Activated naive CD4-positive, alpha-beta T cell treated with anti-CD3 and anti-CD28 coated beads, Interleukin-2, amount 10 ng/mL, durations not matched to agents 7 days and 5 days (primary cell): ENCODE measurements at regions of chr3 and their contacts with region 1.

Region 1: DNA sequence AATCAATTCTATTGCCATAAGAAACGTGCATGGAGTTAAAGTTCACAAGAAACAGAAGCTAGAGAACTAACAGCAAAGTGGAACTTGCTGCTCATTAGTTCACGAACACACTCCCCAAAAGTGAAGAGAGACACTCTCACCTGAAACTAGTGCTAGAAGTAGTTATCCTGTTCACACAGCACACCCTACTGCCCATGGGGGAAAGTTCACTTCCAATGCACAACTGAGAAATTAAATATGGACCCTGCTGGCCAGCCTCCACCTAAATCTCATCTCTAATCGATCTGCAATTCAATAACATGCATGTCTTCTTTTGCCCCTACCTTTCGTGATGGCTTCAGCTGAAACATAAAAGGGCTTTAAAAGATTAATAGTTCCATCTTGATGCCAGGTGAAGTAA is 39.4 kb upstream of the FRMD4B start:
- DNase-seq: peak; percentile 41
- H3K4me3 Mint-ChIP-seq: no peak overlapping the region
- H3K27ac Mint-ChIP-seq: no peak overlapping the region
- H3K4me1 Mint-ChIP-seq: peaks cover 2% of the 10 kb centered on the region
- H3K27me3 Mint-ChIP-seq: peaks cover 4% of the 10 kb centered on the region

Region 2: GRCh38 chr3:69324362-69325025 is 100.8 kb before region 1 on chr3:
- CTCF ChIA-PET with region 1: interaction called, 30 read pairs
- DNase-seq: no peak
- H3K4me3 Mint-ChIP-seq: no peak overlapping the region
- H3K27ac Mint-ChIP-seq: peak overlapping the region; percentile 60
- H3K4me1 Mint-ChIP-seq: peaks cover 42% of the 10 kb centered on the region
- H3K27me3 Mint-ChIP-seq: no peaks in the 10 kb centered on the region